ENCODE measurements at regions of chr10 and their contacts with region 1.

Region 1: DNA sequence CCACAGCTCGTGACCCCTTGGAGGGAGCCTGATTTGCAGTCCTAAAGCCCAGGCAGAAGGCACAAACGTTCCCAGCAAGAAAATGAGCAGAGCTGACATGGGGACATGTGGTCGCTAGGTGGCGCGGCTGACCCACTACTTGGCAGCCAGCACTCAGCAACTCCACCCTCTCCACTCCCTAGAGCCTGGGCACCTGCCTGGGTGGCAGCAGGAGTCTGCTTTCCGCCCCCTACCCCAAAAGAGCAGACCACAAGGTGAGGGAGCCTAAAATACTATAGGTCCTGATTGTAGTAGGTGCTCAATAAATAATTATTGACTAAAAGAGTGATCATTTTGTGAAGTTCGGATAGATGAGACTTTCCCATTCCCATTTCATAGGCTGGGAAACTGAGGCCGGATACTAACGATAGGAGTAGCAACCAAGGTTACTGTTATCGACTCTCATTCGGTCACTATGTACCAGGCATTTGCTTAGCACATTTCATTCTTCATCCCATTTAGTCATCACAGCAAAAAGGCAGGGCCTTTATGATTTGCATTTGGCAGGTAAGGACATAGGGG is 57.4 kb downstream of the NEUROG3 start:
- DNase-seq: peak; percentile 59 to 87 (median 78)
- ATAC-seq: peak; percentile 97
- H3K4me3 ChIP-seq: no peak overlapping the region
- H3K4me3 Mint-ChIP-seq: no peak overlapping the region
- H3K27ac ChIP-seq: no peak overlapping the region
- H3K27ac Mint-ChIP-seq: no peak overlapping the region
- H3K4me1 ChIP-seq: no peaks in the 10 kb centered on the region
- H3K4me1 Mint-ChIP-seq: no peaks in the 10 kb centered on the region
- H3K27me3 ChIP-seq: no peaks in the 10 kb centered on the region
- H3K27me3 Mint-ChIP-seq: peaks cover 30% of the 10 kb centered on the region
- CTCF ChIP-seq: peak; percentile 81

Region 2: DNA sequence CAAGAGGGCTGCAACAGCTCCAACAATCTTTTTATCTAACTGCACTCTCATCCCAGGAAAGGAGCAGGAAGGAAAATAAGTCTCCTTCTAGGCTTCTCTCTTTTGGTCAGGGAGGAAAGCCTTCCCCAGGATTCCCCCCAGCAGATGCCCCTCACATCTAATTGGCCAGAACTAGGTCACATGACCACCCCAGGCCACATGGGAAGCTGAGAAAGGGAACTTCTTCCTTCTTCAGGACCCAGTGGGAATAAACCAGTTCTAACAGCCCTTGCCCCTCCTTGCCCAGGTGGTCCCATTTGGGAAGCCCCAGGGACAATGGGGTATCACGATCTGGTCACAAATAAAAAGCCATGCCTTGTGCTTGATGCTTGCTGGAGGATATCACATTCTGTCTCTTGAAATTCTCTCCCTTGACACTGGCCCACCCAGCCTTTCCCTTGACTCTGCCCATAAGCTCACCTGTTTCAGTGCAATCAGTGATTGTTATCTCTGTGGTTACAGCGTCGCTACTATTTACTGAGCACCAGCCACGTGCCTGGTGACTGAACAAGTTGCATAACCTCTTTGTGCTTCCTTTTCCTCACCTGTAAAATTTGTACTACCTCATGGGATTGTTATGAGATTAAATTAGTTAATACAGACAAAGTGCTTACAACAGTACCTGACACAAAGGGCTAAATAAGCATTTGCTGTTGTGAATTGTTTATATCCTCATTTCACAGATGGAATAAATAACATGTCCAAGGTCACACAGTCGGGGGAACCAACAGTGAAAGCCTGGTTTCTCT is 90.1 kb before region 1 on chr10:
- CTCF ChIA-PET with region 1: no interaction called
- POLR2A ChIA-PET with region 1: no interaction called
- intact Hi-C with region 1: no loop called
- DNase-seq: peak in 5 of 9 experiments; percentile 23 to 76 (median 65)
- ATAC-seq: peak; percentile 84
- H3K4me3 ChIP-seq: no peak overlapping the region
- H3K4me3 Mint-ChIP-seq: no peak overlapping the region
- H3K27ac ChIP-seq: peak overlapping the region; percentile 32 to 44
- H3K27ac Mint-ChIP-seq: peak overlapping the region; percentile 69
- H3K4me1 ChIP-seq: peaks cover 36% of the 10 kb centered on the region
- H3K4me1 Mint-ChIP-seq: peaks cover 53% of the 10 kb centered on the region
- H3K27me3 ChIP-seq: no peaks in the 10 kb centered on the region
- H3K27me3 Mint-ChIP-seq: no peaks in the 10 kb centered on the region
- CTCF ChIP-seq: no peak

Region 3: DNA sequence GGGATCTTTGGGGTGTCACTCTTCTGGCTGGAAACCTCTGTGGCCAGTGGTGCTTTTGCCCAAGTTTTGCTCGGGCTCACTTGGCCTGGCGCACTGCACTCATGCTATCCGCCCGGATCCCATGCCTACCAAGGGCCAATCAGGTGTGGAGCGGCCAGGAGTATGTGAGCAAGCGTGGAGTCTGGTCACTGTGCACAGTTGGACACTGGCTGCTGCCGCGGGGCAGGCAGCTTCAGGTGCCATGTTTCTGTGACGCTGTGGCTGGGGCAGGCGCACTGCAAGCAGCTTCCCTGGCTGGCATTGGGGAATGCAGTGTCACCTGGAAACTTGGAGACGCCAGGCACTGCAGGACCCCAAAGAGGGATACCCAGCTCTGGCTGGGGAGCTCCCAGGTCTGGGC is 12.2 kb after region 1 on chr10:
- CTCF ChIA-PET with region 1: interaction called, 13 read pairs
- POLR2A ChIA-PET with region 1: no interaction called
- intact Hi-C with region 1: no loop called
- DNase-seq: no peak
- ATAC-seq: no peak
- H3K4me3 ChIP-seq: no peak overlapping the region
- H3K4me3 Mint-ChIP-seq: no peak overlapping the region
- H3K27ac ChIP-seq: no peak overlapping the region
- H3K27ac Mint-ChIP-seq: no peak overlapping the region
- H3K4me1 ChIP-seq: no peaks in the 10 kb centered on the region
- H3K4me1 Mint-ChIP-seq: no peaks in the 10 kb centered on the region
- H3K27me3 ChIP-seq: no peaks in the 10 kb centered on the region
- H3K27me3 Mint-ChIP-seq: peaks cover 11% of the 10 kb centered on the region
- CTCF ChIP-seq: no peak

Region 4: DNA sequence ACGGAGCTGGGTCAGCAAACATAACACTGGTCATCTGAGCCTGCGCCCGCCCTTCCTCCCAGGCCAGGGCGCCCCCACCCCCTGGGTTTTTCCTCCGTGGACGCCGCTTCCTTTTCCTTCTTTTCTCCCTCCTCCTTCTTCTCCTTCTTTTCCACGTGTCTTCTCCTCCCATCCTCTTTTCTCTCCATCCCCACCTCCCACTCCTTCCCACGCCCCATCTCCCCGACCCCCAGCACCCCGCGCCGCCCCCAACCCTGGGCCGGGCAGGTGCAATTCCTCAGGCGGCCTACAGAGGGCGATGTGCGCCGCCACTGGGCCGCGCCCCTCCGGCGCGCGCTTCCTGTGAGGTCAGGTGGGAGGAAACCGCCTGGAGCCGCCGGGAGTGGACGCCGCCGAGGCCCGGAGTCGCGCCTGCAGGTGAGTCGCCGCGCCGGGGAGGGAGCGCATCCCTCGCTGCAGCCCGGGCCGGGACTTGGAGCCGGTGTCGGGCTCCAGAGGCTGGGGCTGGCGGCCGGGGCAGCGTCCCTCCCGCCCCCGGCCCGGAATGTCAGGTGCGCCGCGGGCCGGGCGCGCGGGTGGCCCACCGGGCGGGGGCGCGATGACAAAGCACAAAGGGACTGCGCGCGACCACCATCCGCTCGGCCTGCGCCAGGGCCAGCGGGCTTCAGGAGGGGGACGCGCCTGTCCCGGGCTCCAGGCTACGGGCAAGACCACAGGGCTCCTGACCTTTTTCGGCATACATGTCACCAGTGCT is 114.3 kb after region 1 on chr10 and contains the start of gene FAM241B:
- CTCF ChIA-PET with region 1: interaction called, 441 read pairs
- POLR2A ChIA-PET with region 1: no interaction called
- intact Hi-C with region 1: no loop called
- DNase-seq: peak; percentile 40 to 86 (median 75)
- ATAC-seq: peak; percentile 99
- H3K4me3 ChIP-seq: peak within 1 kb of the TSS; percentile 48 to 83
- H3K4me3 Mint-ChIP-seq: peak within 1 kb of the TSS; percentile 76
- H3K27ac ChIP-seq: peak within 1 kb of the TSS in 1 of 2 experiments; percentile 37
- H3K27ac Mint-ChIP-seq: peak within 1 kb of the TSS; percentile 70
- H3K4me1 ChIP-seq: peaks cover 21% of the 10 kb centered on the region
- H3K4me1 Mint-ChIP-seq: peaks cover 24% of the 10 kb centered on the region
- H3K27me3 ChIP-seq: no peaks in the 10 kb centered on the region
- H3K27me3 Mint-ChIP-seq: no peaks in the 10 kb centered on the region
- CTCF ChIP-seq: peak; percentile 100
- total RNA-seq, gene FAM241B: 7.4 to 9.1 TPM

Region 5: DNA sequence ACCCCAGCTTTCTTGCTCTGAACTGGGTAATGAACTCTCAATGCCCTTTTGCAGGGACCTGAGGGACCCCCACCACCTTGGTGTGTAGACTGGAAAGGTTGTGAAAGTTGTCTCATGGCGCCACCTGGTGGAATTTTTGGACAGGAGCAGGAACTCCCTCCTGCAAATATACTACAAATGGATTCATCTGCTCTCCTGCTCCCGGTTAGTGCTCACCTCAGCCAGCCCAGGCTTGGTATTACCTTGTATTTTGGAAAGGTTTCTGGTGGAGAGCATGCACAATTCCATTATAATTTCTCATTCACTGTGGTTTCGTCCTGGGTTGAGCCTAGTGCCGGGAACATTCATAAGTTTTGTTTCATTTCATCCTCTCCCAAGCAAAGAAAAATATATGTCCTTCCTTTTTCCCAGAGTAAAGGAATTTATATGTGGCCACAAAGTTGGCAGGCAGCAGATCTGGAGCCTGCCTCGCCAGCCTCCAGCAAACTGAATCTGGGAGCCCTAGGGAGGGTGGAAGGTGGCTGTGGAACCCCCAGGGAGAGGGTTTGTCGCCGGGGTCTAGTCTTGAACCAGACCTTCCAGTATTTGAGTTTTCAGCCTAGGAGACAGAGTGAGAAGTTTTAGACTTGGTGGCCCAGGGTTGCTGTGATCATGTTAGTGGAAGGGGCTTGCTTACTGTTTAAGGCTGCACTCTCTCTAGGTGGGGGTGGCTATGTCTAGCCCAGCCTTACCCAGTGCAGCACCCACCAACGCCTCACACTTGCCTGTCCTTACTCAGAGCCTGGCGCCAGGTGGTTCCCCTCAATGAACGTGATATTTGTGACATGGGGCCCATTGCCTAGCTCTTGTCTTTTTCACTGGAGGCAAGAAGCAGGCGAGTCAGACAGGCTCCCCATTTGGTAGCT is 123.8 kb after region 1 on chr10:
- CTCF ChIA-PET with region 1: interaction called, 441 read pairs
- POLR2A ChIA-PET with region 1: interaction called, 5 read pairs
- intact Hi-C with region 1: loop called (anchors 1 kb)
- DNase-seq: peak; percentile 43 to 83 (median 71)
- ATAC-seq: peak; percentile 76
- H3K4me3 ChIP-seq: no peak overlapping the region
- H3K4me3 Mint-ChIP-seq: no peak overlapping the region
- H3K27ac ChIP-seq: no peak overlapping the region
- H3K27ac Mint-ChIP-seq: no peak overlapping the region
- H3K4me1 ChIP-seq: no peaks in the 10 kb centered on the region
- H3K4me1 Mint-ChIP-seq: no peaks in the 10 kb centered on the region
- H3K27me3 ChIP-seq: peaks cover 0 to 2% of the 10 kb centered on the region in 2 experiments
- H3K27me3 Mint-ChIP-seq: peaks cover 7% of the 10 kb centered on the region
- CTCF ChIP-seq: peak; percentile 86

Region 6: GRCh38 chr10:69716711-69717560 is 201.2 kb after region 1 on chr10:
- CTCF ChIA-PET with region 1: interaction called, 19 read pairs
- POLR2A ChIA-PET with region 1: no interaction called
- intact Hi-C with region 1: loop called (anchors 2 kb)
- DNase-seq: peak in 8 of 9 experiments; percentile 9 to 65 (median 53)
- ATAC-seq: no peak
- H3K4me3 ChIP-seq: no peak overlapping the region
- H3K4me3 Mint-ChIP-seq: no peak overlapping the region
- H3K27ac ChIP-seq: no peak overlapping the region
- H3K27ac Mint-ChIP-seq: no peak overlapping the region
- H3K4me1 ChIP-seq: no peaks in the 10 kb centered on the region
- H3K4me1 Mint-ChIP-seq: no peaks in the 10 kb centered on the region
- H3K27me3 ChIP-seq: peaks cover 0 to 5% of the 10 kb centered on the region in 2 experiments
- H3K27me3 Mint-ChIP-seq: peaks cover 20% of the 10 kb centered on the region
- CTCF ChIP-seq: peak; percentile 37

Region 7: GRCh38 chr10:69800109-69800508 is 284.3 kb after region 1 on chr10:
- CTCF ChIA-PET with region 1: no interaction called
- POLR2A ChIA-PET with region 1: no interaction called
- intact Hi-C with region 1: loop called (anchors 5 kb)
- DNase-seq: peak in 1 of 9 experiments; percentile 17
- ATAC-seq: no peak
- H3K4me3 ChIP-seq: no peak overlapping the region
- H3K4me3 Mint-ChIP-seq: no peak overlapping the region
- H3K27ac ChIP-seq: no peak overlapping the region
- H3K27ac Mint-ChIP-seq: no peak overlapping the region
- H3K4me1 ChIP-seq: peaks cover 9% of the 10 kb centered on the region
- H3K4me1 Mint-ChIP-seq: peaks cover 12% of the 10 kb centered on the region
- H3K27me3 ChIP-seq: peaks cover 5 to 7% of the 10 kb centered on the region in 2 experiments
- H3K27me3 Mint-ChIP-seq: peaks cover 60% of the 10 kb centered on the region
- CTCF ChIP-seq: no peak

Region 8: DNA sequence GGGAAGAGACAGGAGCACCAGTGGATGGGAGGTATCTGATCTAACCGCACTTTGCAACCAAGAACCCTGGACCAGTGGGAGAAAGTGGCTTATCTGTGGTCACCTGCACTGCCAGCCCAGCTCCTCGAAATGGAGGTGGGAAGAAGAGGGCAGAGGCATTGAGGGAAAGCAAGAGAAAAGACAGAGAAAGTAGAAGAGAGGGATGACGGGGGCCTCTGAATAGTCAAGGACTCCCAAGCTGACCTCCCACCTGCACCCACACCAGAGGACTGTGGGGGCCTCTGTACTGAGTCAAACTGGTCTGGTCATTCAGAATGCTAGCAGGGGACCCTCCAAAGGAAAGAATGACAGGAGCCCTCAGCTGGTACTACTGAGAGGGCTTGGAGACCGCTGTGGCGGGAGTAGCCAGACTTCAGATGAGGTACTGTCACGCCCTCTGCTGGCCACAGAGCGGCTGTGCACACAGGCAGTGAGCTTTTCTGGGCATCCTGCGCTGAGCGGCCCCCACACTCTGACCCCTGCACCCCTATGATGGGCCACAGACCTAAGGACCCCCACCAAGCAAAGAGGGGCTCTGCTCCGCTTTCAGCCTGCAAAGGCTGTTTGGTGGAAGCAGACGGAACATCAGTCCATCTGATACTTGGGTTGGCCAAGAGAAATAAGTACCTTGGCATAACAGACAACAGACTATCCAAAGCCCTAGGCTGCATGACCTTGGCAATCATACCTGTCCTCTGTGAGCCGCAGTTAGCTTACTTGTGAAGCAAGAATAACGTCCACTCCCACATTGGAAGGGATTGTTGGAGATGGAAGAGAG is 398.8 kb after region 1 on chr10:
- CTCF ChIA-PET with region 1: no interaction called
- POLR2A ChIA-PET with region 1: no interaction called
- intact Hi-C with region 1: loop called in 1 of 2 experiments (anchors 1 kb)
- DNase-seq: peak in 8 of 9 experiments; percentile 27 to 64 (median 49)
- ATAC-seq: peak; percentile 68
- H3K4me3 ChIP-seq: no peak overlapping the region
- H3K4me3 Mint-ChIP-seq: no peak overlapping the region
- H3K27ac ChIP-seq: no peak overlapping the region
- H3K27ac Mint-ChIP-seq: no peak overlapping the region
- H3K4me1 ChIP-seq: no peaks in the 10 kb centered on the region
- H3K4me1 Mint-ChIP-seq: no peaks in the 10 kb centered on the region
- H3K27me3 ChIP-seq: peaks cover 0 to 2% of the 10 kb centered on the region in 2 experiments
- H3K27me3 Mint-ChIP-seq: peaks cover 2% of the 10 kb centered on the region
- CTCF ChIP-seq: peak; percentile 74

Measured in CD8-positive, alpha-beta T cell (primary cell).